PC-3 (cell line): ENCODE measurements at regions of chrX and their contacts with region 1.

Region 1: GRCh38 chrX:84441143-84441542 is 61.1 kb downstream of the HDX start:
- DNase-seq: peak; percentile 78
- ATAC-seq: peak; percentile 92
- H3K4me3 ChIP-seq: no peak overlapping the region
- H3K27ac ChIP-seq: peak overlapping the region; percentile 72
- H3K4me1 ChIP-seq: peaks cover 27% of the 10 kb centered on the region
- H3K27me3 ChIP-seq: no peaks in the 10 kb centered on the region
- CTCF ChIP-seq: no peak

Region 2: DNA sequence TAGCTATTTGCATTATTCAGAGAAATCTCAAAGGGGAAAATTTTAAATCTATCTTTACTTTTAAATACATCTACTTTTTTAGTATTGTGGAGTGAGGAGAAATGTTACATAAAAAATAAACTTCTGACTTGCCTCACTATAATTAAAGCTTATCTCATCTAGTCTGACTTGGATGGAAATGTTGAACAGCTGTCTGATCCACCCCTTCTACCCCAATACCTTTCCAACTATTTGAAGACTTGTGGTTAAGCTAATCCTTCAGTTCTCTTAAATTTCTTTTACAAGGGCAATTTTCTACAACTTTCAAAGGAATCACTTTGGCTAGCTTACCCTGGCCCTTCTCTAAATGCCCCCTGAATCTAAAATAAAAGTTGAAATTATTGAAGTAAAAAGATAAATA is 235.9 kb before region 1 on chrX:
- CTCF ChIA-PET with region 1: no interaction called
- POLR2A ChIA-PET with region 1: no interaction called
- intact Hi-C with region 1: no loop called
- DNase-seq: no peak
- ATAC-seq: no peak
- H3K4me3 ChIP-seq: no peak overlapping the region
- H3K27ac ChIP-seq: no peak overlapping the region
- H3K4me1 ChIP-seq: no peaks in the 10 kb centered on the region
- H3K27me3 ChIP-seq: no peaks in the 10 kb centered on the region
- CTCF ChIP-seq: no peak

Region 3: GRCh38 chrX:84501798-84502628 is 60.9 kb after region 1 on chrX and contains the start of gene HDX:
- CTCF ChIA-PET with region 1: no interaction called
- POLR2A ChIA-PET with region 1: no interaction called
- intact Hi-C with region 1: loop called (anchors 5 kb)
- DNase-seq: peak; percentile 80
- ATAC-seq: peak; percentile 96
- H3K4me3 ChIP-seq: peak within 1 kb of the TSS; percentile 80
- H3K27ac ChIP-seq: peak within 1 kb of the TSS; percentile 70
- H3K4me1 ChIP-seq: no peaks in the 10 kb centered on the region
- H3K27me3 ChIP-seq: no peaks in the 10 kb centered on the region
- CTCF ChIP-seq: no peak
- total RNA-seq, gene HDX: 2.8 and 3.4 TPM in 2 replicates